ENCODE measurements at regions of chr11 and their contacts with region 1.

Region 1: DNA sequence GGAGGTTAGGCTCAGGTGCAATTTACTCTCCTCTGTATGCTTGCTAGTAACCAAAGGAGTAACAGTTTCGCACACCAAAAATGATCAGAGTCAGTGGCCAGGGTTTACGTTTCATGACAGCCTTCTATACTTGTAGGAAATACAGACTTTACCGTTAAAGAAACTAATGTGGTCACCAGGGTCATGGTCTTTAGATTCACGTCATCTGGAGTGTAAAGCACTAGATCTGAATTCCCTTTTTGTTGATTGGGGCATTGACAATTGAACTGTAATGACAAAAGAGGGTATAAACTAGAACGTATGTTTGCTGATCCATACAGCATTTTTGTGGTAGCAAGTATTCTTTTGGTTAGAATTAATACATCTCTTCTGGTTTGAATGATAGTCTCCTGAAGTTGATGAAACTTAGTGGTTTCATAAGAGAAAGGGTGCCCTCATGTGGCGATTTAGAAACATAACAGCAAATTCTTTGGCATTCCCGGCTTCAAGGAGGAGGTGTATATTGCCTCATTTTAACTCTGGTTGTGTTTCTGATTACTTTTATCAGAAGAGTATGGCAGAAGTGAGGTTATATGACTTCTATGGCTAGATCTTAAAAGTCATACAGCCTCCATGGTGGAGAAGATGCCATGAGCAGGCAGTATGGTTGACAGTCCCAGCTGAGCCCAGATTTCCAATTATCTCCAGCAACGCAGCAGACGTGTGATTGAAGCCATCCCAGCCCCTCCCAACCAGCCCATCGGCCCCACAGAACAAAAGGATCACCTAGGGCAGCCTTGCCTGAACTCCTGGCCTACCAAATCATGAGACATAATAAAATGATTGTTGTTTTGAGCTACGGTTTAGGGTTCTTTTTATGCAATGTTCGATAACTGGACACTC is 35.1 kb downstream of the MMP7 start:
- DNase-seq: peak; percentile 36
- H3K4me3 ChIP-seq: no peak overlapping the region
- H3K27ac ChIP-seq: no peak overlapping the region
- H3K4me1 ChIP-seq: no peaks in the 10 kb centered on the region
- H3K27me3 ChIP-seq: no peaks in the 10 kb centered on the region
- CTCF ChIP-seq: peak; percentile 41 to 67 (median 67)
- POLR2A ChIP-seq: no peak

Region 2: GRCh38 chr11:101960216-101960615 is 535.2 kb before region 1 on chr11:
- intact Hi-C with region 1: no loop called
- DNase-seq: no peak
- H3K4me3 ChIP-seq: no peak overlapping the region
- H3K27ac ChIP-seq: no peak overlapping the region
- H3K4me1 ChIP-seq: no peaks in the 10 kb centered on the region
- H3K27me3 ChIP-seq: no peaks in the 10 kb centered on the region
- CTCF ChIP-seq: no peak
- POLR2A ChIP-seq: no peak

Region 3: DNA sequence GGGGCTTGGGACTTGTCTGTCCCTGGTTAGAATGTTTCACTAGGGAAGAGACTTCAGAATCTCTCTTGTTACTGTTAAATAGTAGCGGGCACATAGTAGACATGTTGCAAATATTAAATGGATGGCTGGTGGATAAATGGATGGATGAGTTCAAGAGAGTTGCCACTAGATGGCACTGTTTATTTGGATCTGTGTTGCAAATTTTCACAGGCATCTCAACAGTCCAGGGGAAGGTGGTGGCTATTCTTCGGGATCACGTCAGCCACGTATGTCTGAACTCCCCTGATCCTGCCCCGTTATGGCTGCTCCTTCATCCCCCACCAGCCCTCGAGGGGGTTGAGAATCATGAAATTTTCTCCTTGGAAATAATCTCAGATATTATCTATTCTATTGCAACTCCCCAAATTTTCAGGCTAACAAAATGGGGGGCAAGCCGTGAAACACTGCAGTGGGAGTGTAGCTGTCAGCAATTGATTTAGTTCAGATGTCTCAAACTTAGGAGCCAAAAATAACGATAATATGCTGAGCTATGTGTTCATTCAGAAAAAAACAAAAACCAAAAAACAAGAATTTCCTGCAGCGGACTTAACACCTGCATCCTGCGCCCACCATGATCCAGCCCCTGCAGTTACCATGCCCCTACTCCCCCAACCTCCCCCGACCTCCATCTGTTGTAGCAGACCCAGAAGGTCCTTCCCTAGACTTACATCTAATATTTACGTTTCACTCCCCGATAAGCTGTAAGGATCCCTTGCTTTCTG is 207.3 kb before region 1 on chr11:
- intact Hi-C with region 1: loop called (anchors 10 kb)
- DNase-seq: peak; percentile 58
- H3K4me3 ChIP-seq: peak overlapping the region in 1 of 2 donors; percentile 30
- H3K27ac ChIP-seq: no peak overlapping the region
- H3K4me1 ChIP-seq: peaks cover 16% of the 10 kb centered on the region
- H3K27me3 ChIP-seq: no peaks in the 10 kb centered on the region
- CTCF ChIP-seq: peak; percentile 63 to 86 (median 82)
- POLR2A ChIP-seq: no peak

Region 4: GRCh38 chr11:102323542-102324251 is 171.7 kb before region 1 on chr11:
- intact Hi-C with region 1: no loop called
- DNase-seq: no peak
- H3K4me3 ChIP-seq: no peak overlapping the region
- H3K27ac ChIP-seq: no peak overlapping the region
- H3K4me1 ChIP-seq: no peaks in the 10 kb centered on the region
- H3K27me3 ChIP-seq: no peaks in the 10 kb centered on the region
- CTCF ChIP-seq: no peak
- POLR2A ChIP-seq: no peak

Region 5: GRCh38 chr11:102359372-102359771 is 136.0 kb before region 1 on chr11:
- intact Hi-C with region 1: loop called (anchors 10 kb)
- DNase-seq: no peak
- H3K4me3 ChIP-seq: no peak overlapping the region
- H3K27ac ChIP-seq: no peak overlapping the region
- H3K4me1 ChIP-seq: no peaks in the 10 kb centered on the region
- H3K27me3 ChIP-seq: no peaks in the 10 kb centered on the region
- CTCF ChIP-seq: no peak
- POLR2A ChIP-seq: no peak

Region 6: GRCh38 chr11:102666331-102666957 is 171.0 kb after region 1 on chr11:
- intact Hi-C with region 1: loop called (anchors 10 kb)
- DNase-seq: peak; percentile 31
- H3K4me3 ChIP-seq: no peak overlapping the region
- H3K27ac ChIP-seq: no peak overlapping the region
- H3K4me1 ChIP-seq: no peaks in the 10 kb centered on the region
- H3K27me3 ChIP-seq: no peaks in the 10 kb centered on the region
- CTCF ChIP-seq: peak; percentile 42 to 80 (median 72)
- POLR2A ChIP-seq: no peak

Measured in testis (tissue), 5 donors.